ENCODE measurements at regions of chr16 and their contacts with region 1.

Region 1: DNA sequence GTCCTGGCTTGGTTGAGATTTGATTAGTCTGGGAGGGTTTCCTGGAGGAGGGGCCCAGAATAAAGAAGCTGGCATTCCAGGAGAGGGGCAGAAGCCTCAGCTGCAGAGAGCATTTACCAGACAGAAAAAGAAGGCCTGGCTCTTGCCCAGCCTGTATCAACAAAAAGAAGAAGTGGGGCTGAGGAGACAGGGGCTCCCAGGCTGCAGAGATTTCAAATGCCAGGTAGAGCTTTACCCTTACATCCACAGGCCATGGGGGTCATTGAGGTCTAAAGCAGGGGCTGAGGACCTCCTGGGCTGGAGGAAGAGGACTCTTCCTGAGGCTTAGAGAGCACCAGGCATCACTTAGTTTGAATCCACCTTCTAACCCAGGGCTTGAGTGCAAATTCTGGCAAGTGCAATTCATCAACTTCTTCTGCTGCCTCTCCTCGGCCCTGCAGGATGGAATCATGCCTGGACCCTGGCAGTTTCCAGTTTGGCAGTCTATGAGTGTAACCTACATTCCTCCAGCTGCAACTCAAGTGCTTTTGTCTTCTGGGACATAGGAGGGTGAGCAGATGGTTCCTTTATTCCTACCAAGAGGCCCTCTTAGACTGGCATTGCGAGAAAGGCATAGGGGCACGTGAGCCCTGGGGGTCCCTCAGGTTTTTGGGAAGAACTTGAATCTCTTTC is 15.3 kb downstream of the CA7 start:
- DNase-seq: no peak
- H3K4me3 ChIP-seq: no peak overlapping the region
- H3K27ac ChIP-seq: no peak overlapping the region
- H3K4me1 ChIP-seq: peaks cover 0 to 3% (median 0%) of the 10 kb centered on the region in 4 donors
- H3K27me3 ChIP-seq: no peaks in the 10 kb centered on the region
- CTCF ChIP-seq: no peak
- EP300 ChIP-seq: no peak
- POLR2A ChIP-seq: no peak

Region 2: GRCh38 chr16:66728117-66728787 is 131.3 kb before region 1 on chr16:
- in situ Hi-C with region 1: no loop called
- intact Hi-C with region 1: loop called (anchors 10 kb)
- DNase-seq: peak; percentile 22
- H3K4me3 ChIP-seq: no peak overlapping the region
- H3K27ac ChIP-seq: peak overlapping the region in 1 of 4 donors; percentile 10
- H3K4me1 ChIP-seq: peaks cover 0 to 12% (median 2%) of the 10 kb centered on the region in 4 donors
- H3K27me3 ChIP-seq: no peaks in the 10 kb centered on the region
- CTCF ChIP-seq: peak; percentile 64 to 74 (median 68)
- EP300 ChIP-seq: no peak
- POLR2A ChIP-seq: no peak

Region 3: GRCh38 chr16:66814734-66815133 is 44.8 kb before region 1 on chr16:
- in situ Hi-C with region 1: no loop called
- intact Hi-C with region 1: no loop called
- DNase-seq: no peak
- H3K4me3 ChIP-seq: no peak overlapping the region
- H3K27ac ChIP-seq: no peak overlapping the region
- H3K4me1 ChIP-seq: no peaks in the 10 kb centered on the region
- H3K27me3 ChIP-seq: no peaks in the 10 kb centered on the region
- CTCF ChIP-seq: no peak
- EP300 ChIP-seq: no peak
- POLR2A ChIP-seq: no peak

Region 4: DNA sequence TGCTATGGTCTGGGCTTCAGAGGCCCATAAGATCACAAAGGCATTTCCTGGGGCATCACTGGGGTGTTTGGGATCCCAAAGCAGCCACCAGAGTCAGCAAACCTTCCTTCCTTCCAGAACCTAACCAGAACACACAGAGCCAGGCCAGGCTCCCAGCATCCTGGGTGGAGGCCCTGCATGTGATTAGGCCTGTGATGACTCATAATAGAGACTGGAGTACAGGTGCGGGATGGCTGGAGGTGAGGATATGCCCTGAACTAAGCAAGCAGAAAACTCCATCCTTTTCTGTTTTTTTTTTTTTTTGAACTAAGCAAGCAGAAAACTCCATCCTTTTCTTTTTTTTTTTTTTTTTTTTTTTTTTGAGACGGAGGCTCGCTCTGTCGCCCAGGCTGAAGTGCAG is 877.3 kb after region 1 on chr16:
- in situ Hi-C with region 1: no loop called
- intact Hi-C with region 1: no loop called
- DNase-seq: no peak
- H3K4me3 ChIP-seq: no peak overlapping the region
- H3K27ac ChIP-seq: no peak overlapping the region
- H3K4me1 ChIP-seq: no peaks in the 10 kb centered on the region
- H3K27me3 ChIP-seq: no peaks in the 10 kb centered on the region
- CTCF ChIP-seq: no peak
- EP300 ChIP-seq: no peak
- POLR2A ChIP-seq: no peak